Mammary epithelial cell (primary cell): ENCODE measurements at regions of chr12 and their contacts with region 1.

Region 1: DNA sequence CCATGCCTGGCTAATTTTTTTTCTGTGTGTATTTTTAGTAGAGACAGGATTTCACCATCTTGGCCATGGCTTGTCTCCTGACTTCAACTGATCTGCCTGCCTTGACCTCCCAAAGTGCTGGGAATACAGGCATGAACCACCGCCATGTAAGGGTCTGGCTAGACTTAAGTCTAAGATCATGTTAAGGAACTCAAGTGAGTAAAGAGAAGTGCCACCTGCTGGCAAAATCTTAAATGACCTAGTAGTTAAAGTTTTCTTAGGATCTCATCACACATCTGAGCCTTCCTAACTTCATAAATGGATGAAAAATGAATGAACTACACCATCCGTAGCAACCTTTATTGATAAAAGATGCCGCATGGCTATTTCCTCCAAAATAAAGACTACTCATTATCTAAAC is 1.7 kb upstream of the C12orf56 start:
- DNase-seq: peak; percentile 30
- H3K4me3 ChIP-seq: no peak overlapping the region
- H3K27ac ChIP-seq: no peak overlapping the region
- H3K4me1 ChIP-seq: peaks cover 9% of the 10 kb centered on the region
- H3K27me3 ChIP-seq: no peaks in the 10 kb centered on the region
- CTCF ChIP-seq: peak; percentile 46 to 57

Region 2: DNA sequence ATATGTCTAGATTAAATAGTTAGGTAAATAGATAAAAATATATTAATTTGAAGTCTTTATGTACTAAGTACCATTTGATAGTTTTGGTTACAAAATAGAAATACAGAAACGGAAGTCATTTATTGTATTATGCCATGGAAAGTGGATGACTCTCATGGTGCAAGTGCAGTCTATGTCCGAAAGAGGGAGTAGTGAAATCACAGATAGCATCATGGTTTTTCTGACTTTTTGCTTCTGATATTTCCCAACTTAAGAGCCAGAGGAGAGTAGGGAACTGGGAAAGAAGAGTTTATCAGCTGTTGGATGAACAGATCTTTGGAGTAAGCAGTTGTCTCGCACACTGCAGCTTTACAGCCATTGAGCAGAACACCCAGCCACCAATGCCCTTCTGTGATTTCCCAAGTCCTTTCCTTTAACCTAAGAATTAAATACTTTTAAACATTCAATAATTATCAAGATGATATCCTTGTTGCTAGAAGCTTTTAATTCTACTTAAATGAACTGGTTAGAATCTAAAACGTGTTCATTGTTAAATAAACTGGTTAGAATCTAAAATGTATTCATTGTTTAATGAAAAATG is 566.1 kb before region 1 on chr12:
- CTCF ChIA-PET with region 1: no interaction called
- dilution Hi-C with region 1: no loop called
- in situ Hi-C with region 1: loop called in 1 of 2 experiments (anchors 10 kb)
- intact Hi-C with region 1: loop called (anchors 1 kb)
- DNase-seq: peak; percentile 52
- H3K4me3 ChIP-seq: no peak overlapping the region
- H3K27ac ChIP-seq: no peak overlapping the region
- H3K4me1 ChIP-seq: peaks cover 15% of the 10 kb centered on the region
- H3K27me3 ChIP-seq: no peaks in the 10 kb centered on the region
- CTCF ChIP-seq: peak; percentile 81 to 88

Region 3: DNA sequence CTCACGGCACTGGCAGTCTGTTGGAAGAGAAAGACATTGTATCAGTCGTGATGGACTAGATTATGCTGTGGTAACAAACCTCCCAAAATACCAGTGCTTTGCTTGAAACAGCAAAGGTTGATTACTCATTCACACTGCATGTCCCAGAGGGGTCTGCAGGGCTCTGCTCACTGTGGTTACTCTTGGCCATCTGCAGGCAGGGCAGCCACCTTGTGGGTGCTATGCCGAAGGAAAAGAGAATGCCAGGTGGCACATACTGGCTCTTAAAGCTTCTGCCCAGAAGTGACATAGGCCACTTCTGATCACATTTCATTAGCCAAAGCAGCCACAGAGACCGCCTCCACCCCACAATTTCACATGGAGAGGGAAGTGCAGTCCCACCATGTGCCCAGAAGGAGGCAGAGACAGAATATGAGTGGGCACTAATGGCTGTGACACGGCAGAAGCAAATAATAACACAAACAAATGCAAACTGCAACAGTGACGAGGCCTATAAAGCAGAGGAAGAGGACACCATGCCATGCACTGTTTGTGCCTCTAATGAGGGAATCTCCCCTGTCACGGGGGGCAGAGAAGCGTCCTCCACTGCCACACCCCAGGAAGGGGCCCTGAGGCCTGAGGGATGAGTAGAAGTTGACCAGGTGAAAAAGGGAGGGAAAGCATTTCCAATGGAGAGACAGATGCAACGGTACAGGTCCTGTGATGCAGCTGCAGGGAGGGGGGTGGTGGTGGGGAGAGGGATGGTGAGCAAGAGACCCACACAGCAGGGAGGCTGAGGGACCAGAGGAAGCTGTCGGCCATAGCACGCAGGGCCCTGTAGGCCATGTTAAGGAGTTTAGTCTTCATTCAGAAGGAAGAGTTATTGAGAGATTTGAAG is 118.5 kb before region 1 on chr12:
- CTCF ChIA-PET with region 1: no interaction called
- dilution Hi-C with region 1: no loop called
- in situ Hi-C with region 1: loop called (anchors 5 to 10 kb)
- intact Hi-C with region 1: loop called (anchors 1 kb)
- DNase-seq: peak; percentile 9
- H3K4me3 ChIP-seq: no peak overlapping the region
- H3K27ac ChIP-seq: no peak overlapping the region
- H3K4me1 ChIP-seq: no peaks in the 10 kb centered on the region
- H3K27me3 ChIP-seq: no peaks in the 10 kb centered on the region
- CTCF ChIP-seq: peak; percentile 56 to 79